ENCODE measurements at regions of chr11 and their contacts with region 1.

Region 1: GRCh38 chr11:29005401-29005980 is 897.3 kb downstream of the METTL15 start:
- DNase-seq: no peak
- H3K4me3 Mint-ChIP-seq: no peak overlapping the region
- H3K27ac Mint-ChIP-seq: no peak overlapping the region
- H3K4me1 Mint-ChIP-seq: no peaks in the 10 kb centered on the region
- H3K27me3 Mint-ChIP-seq: no peaks in the 10 kb centered on the region
- CTCF ChIP-seq: no peak

Region 2: GRCh38 chr11:28123151-28123581 is 882.3 kb before region 1 on chr11:
- CTCF ChIA-PET with region 1: no interaction called
- intact Hi-C with region 1: loop called (anchors 10 kb)
- DNase-seq: no peak
- H3K4me3 Mint-ChIP-seq: no peak overlapping the region
- H3K27ac Mint-ChIP-seq: peak overlapping the region; percentile 13
- H3K4me1 Mint-ChIP-seq: no peaks in the 10 kb centered on the region
- H3K27me3 Mint-ChIP-seq: no peaks in the 10 kb centered on the region
- CTCF ChIP-seq: no peak

Region 3: GRCh38 chr11:28826807-28827206 is 178.7 kb before region 1 on chr11:
- CTCF ChIA-PET with region 1: no interaction called
- intact Hi-C with region 1: no loop called
- DNase-seq: no peak
- H3K4me3 Mint-ChIP-seq: no peak overlapping the region
- H3K27ac Mint-ChIP-seq: no peak overlapping the region
- H3K4me1 Mint-ChIP-seq: peaks cover 23% of the 10 kb centered on the region
- H3K27me3 Mint-ChIP-seq: no peaks in the 10 kb centered on the region
- CTCF ChIP-seq: no peak

Region 4: GRCh38 chr11:29712580-29712979 is 707.1 kb after region 1 on chr11:
- CTCF ChIA-PET with region 1: no interaction called
- intact Hi-C with region 1: no loop called
- DNase-seq: no peak
- H3K4me3 Mint-ChIP-seq: no peak overlapping the region
- H3K27ac Mint-ChIP-seq: no peak overlapping the region
- H3K4me1 Mint-ChIP-seq: no peaks in the 10 kb centered on the region
- H3K27me3 Mint-ChIP-seq: no peaks in the 10 kb centered on the region
- CTCF ChIP-seq: no peak